Right ventricle myocardium inferior (tissue), 1 donor: ENCODE measurements at regions of chr7 and their contacts with region 1.

Region 1: GRCh38 chr7:41045556-41046123 is 657.2 kb downstream of the INHBA start:
- DNase-seq: no peak
- ATAC-seq: no peak

Region 2: DNA sequence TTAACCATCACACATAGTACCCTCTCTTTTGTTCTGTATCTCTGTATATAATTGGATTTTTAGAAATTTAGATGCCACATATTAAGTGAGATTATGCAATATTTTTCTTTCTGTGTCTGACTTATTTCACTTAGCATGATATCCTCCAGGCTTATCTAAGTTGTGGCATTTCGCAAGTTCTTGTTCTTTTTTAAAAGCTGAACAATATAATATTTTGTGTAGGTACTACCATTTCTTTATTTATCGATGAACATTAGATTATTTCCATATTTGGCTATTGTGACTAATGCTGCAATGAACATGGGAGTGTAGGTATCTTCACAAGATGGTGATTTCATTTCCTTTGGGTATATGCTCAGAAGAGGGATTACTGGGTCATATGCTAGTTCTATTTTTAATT is 615.8 kb before region 1 on chr7:
- intact Hi-C with region 1: no loop called
- DNase-seq: no peak
- ATAC-seq: no peak

Region 3: DNA sequence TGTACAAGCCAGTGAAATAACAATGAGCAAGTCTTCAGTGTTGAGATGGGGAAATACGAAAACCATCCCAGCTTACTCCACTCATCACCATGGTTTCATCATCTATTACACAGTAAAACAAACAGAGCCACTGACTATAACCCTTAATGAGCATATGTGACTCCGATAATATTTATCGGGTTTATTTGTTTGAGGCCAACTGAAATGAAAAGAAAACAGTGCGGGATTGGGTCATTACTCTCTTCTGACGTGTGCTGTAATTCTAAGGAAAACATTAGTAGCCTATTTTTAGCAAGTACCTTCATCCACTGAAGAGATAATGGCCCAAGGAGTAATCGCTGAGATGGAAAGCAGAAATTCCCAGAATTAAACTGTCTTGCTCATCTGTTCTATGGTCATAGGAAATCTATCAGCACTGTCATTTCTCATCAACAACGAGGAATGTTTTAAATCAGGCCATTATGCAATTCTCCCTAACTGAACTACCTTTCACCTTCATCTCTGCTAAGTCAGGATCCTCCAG is 59.2 kb before region 1 on chr7:
- intact Hi-C with region 1: loop called (anchors 5 kb)
- DNase-seq: no peak
- ATAC-seq: peak; percentile 89

Region 4: GRCh38 chr7:41705109-41705901 is 659.7 kb after region 1 on chr7:
- intact Hi-C with region 1: loop called (anchors 5 kb)
- DNase-seq: peak; percentile 92
- ATAC-seq: peak; percentile 92